Lower leg skin (tissue), 4 donors: ENCODE measurements at regions of chr12 and their contacts with region 1.

Region 1: GRCh38 chr12:114206525-114206924 is 199.4 kb downstream of the TBX5 start:
- DNase-seq: no peak
- H3K4me3 ChIP-seq: no peak overlapping the region
- CTCF ChIP-seq: no peak
- POLR2A ChIP-seq: no peak

Region 2: GRCh38 chr12:114140576-114140975 is 65.9 kb before region 1 on chr12:
- intact Hi-C with region 1: no loop called
- DNase-seq: no peak
- H3K4me3 ChIP-seq: no peak overlapping the region
- CTCF ChIP-seq: no peak
- POLR2A ChIP-seq: no peak

Region 3: GRCh38 chr12:114163771-114164170 is 42.8 kb before region 1 on chr12:
- intact Hi-C with region 1: loop called (anchors 2 kb)
- DNase-seq: no peak
- H3K4me3 ChIP-seq: no peak overlapping the region
- CTCF ChIP-seq: no peak
- POLR2A ChIP-seq: no peak

Region 4: GRCh38 chr12:115044073-115044472 is 837.5 kb after region 1 on chr12:
- intact Hi-C with region 1: no loop called
- DNase-seq: no peak
- H3K4me3 ChIP-seq: no peak overlapping the region
- CTCF ChIP-seq: no peak
- POLR2A ChIP-seq: no peak